CD4-positive, alpha-beta T cell (primary cell): ENCODE measurements at regions of chrX and their contacts with region 1.

Region 1: DNA sequence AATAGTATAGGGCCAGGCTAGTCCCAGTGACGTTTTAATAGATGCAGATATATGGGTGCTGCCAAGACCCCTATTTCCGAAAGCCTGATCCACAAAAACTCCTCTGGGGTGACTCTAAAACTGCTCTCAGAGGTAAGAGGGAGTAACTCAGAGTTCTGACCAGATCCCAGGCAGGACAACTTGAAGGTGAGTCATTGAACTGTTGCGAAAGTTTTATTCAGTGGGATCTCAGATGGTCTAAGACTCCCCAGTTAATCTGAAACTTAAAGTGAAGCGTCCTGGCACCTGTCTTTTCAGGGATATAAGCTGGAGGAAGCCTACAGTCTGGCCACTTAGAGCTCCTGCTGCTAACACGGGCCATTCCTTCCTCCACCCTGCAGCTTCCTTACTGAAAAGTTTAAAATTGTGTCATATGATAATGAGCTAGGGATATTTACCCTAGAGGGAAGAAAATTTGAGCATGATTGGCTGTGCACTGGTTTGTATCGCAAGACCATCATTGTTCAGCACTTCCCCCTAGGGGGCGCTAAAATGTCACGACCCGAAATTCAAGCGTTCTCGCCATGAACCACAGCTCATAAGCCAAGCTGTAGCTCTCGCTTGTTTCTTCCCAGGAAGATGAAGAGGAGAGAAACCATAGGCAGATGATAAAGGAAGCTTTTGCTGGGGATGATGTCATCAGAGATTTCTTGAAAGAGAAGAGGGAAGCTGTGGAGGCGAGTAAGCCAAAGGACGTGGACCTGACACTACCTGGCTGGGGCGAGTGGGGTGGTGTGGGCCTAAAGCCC is 19.5 kb downstream of the UTP14A start:
- DNase-seq: peak; percentile 50 to 84 (median 62)
- ATAC-seq: peak; percentile 74
- H3K4me3 ChIP-seq: no peak overlapping the region
- H3K4me3 Mint-ChIP-seq: no peak overlapping the region
- H3K27ac ChIP-seq: no peak overlapping the region
- H3K27ac Mint-ChIP-seq: no peak overlapping the region
- H3K4me1 ChIP-seq: peaks cover 4% of the 10 kb centered on the region
- H3K4me1 Mint-ChIP-seq: no peaks in the 10 kb centered on the region
- H3K27me3 ChIP-seq: no peaks in the 10 kb centered on the region
- H3K27me3 Mint-ChIP-seq: no peaks in the 10 kb centered on the region
- CTCF ChIP-seq: peak; percentile 45

Region 2: GRCh38 chrX:129665910-129666644 is 259.4 kb before region 1 on chrX:
- CTCF ChIA-PET with region 1: no interaction called
- POLR2A ChIA-PET with region 1: no interaction called
- intact Hi-C with region 1: no loop called
- DNase-seq: no peak
- ATAC-seq: no peak
- H3K4me3 ChIP-seq: no peak overlapping the region
- H3K4me3 Mint-ChIP-seq: no peak overlapping the region
- H3K27ac ChIP-seq: no peak overlapping the region
- H3K27ac Mint-ChIP-seq: no peak overlapping the region
- H3K4me1 ChIP-seq: no peaks in the 10 kb centered on the region
- H3K4me1 Mint-ChIP-seq: no peaks in the 10 kb centered on the region
- H3K27me3 ChIP-seq: no peaks in the 10 kb centered on the region
- H3K27me3 Mint-ChIP-seq: no peaks in the 10 kb centered on the region
- CTCF ChIP-seq: no peak

Region 3: GRCh38 chrX:130024127-130024526 is 98.6 kb after region 1 on chrX:
- CTCF ChIA-PET with region 1: interaction called, 36 read pairs
- POLR2A ChIA-PET with region 1: interaction called, 5 read pairs
- intact Hi-C with region 1: loop called (anchors 1 kb)
- DNase-seq: peak; percentile 57 to 92 (median 78)
- ATAC-seq: peak; percentile 100
- H3K4me3 ChIP-seq: no peak overlapping the region
- H3K4me3 Mint-ChIP-seq: no peak overlapping the region
- H3K27ac ChIP-seq: no peak overlapping the region
- H3K27ac Mint-ChIP-seq: peak overlapping the region; percentile 24
- H3K4me1 ChIP-seq: peaks cover 12% of the 10 kb centered on the region
- H3K4me1 Mint-ChIP-seq: peaks cover 17% of the 10 kb centered on the region
- H3K27me3 ChIP-seq: no peaks in the 10 kb centered on the region
- H3K27me3 Mint-ChIP-seq: no peaks in the 10 kb centered on the region
- CTCF ChIP-seq: no peak

Region 4: GRCh38 chrX:130060122-130061069 is 134.9 kb after region 1 on chrX:
- CTCF ChIA-PET with region 1: interaction called, 8 read pairs
- POLR2A ChIA-PET with region 1: interaction called, 3 read pairs
- intact Hi-C with region 1: loop called (anchors 1 kb)
- DNase-seq: peak; percentile 50 to 87 (median 77)
- ATAC-seq: peak; percentile 82
- H3K4me3 ChIP-seq: peak overlapping the region; percentile 45
- H3K4me3 Mint-ChIP-seq: peak overlapping the region; percentile 71
- H3K27ac ChIP-seq: no peak overlapping the region
- H3K27ac Mint-ChIP-seq: no peak overlapping the region
- H3K4me1 ChIP-seq: peaks cover 13% of the 10 kb centered on the region
- H3K4me1 Mint-ChIP-seq: peaks cover 10% of the 10 kb centered on the region
- H3K27me3 ChIP-seq: no peaks in the 10 kb centered on the region
- H3K27me3 Mint-ChIP-seq: no peaks in the 10 kb centered on the region
- CTCF ChIP-seq: peak; percentile 78

Region 5: DNA sequence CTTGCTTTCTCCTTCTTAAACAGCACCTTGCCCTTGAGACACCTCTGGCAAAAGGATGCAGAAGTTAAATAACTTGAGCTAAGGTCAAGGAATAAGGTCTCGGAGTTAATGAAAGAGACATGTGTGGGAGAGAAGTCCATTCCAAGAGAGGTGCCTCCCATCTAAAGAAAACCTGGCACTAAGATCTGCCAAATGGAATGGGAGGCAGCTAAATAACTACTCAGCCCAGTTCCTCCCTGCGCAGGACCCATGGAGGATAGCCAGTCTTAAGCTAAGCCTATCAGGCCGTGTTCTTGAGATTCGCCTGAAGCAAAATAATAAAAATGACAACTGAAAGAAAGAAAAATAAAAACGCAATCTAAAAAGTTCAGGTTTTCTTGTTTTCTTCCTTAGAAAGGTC is 205.5 kb after region 1 on chrX:
- CTCF ChIA-PET with region 1: no interaction called
- POLR2A ChIA-PET with region 1: no interaction called
- intact Hi-C with region 1: no loop called
- DNase-seq: no peak
- ATAC-seq: no peak
- H3K4me3 ChIP-seq: no peak overlapping the region
- H3K4me3 Mint-ChIP-seq: no peak overlapping the region
- H3K27ac ChIP-seq: no peak overlapping the region
- H3K27ac Mint-ChIP-seq: no peak overlapping the region
- H3K4me1 ChIP-seq: no peaks in the 10 kb centered on the region
- H3K4me1 Mint-ChIP-seq: no peaks in the 10 kb centered on the region
- H3K27me3 ChIP-seq: no peaks in the 10 kb centered on the region
- H3K27me3 Mint-ChIP-seq: no peaks in the 10 kb centered on the region
- CTCF ChIP-seq: no peak

Region 6: GRCh38 chrX:130190801-130191200 is 265.3 kb after region 1 on chrX:
- CTCF ChIA-PET with region 1: no interaction called
- POLR2A ChIA-PET with region 1: no interaction called
- intact Hi-C with region 1: loop called in 1 of 2 experiments (anchors 5 kb)
- DNase-seq: no peak
- ATAC-seq: no peak
- H3K4me3 ChIP-seq: no peak overlapping the region
- H3K4me3 Mint-ChIP-seq: no peak overlapping the region
- H3K27ac ChIP-seq: no peak overlapping the region
- H3K27ac Mint-ChIP-seq: no peak overlapping the region
- H3K4me1 ChIP-seq: no peaks in the 10 kb centered on the region
- H3K4me1 Mint-ChIP-seq: peaks cover 5% of the 10 kb centered on the region
- H3K27me3 ChIP-seq: no peaks in the 10 kb centered on the region
- H3K27me3 Mint-ChIP-seq: no peaks in the 10 kb centered on the region
- CTCF ChIP-seq: no peak